ENCODE measurements at regions of chr6 and their contacts with region 1.

Region 1: GRCh38 chr6:37791156-37791919 is 28.2 kb upstream of the ZFAND3 start:
- DNase-seq: peak; percentile 96
- H3K4me3 ChIP-seq: no peak overlapping the region
- H3K27ac ChIP-seq: peak overlapping the region in 1 of 4 donors; percentile 25
- H3K4me1 ChIP-seq: peaks cover 0 to 12% (median 11%) of the 10 kb centered on the region in 4 donors
- H3K27me3 ChIP-seq: no peaks in the 10 kb centered on the region
- CTCF ChIP-seq: peak; percentile 73 to 93 (median 86)
- EP300 ChIP-seq: no peak
- POLR2A ChIP-seq: no peak

Region 2: DNA sequence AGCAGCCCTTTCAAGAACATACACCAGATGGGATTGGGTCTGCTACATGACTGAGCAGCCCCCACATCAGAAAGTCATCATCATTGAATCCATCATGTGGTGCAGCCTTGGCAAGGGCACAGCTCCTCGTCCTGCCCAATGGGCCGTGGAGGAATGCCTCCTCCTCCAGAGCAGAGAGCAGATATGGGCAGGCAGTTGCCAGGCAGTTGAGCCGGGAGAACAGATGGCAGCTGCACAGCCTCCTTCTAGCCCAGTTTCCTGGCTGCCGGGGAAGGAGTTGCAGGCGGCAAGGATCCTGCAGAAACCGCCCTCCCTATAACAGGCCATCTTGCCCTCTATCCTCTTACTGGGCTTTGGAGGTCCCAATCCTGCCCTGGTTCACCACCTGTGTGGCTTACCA is 16.3 kb after region 1 on chr6:
- intact Hi-C with region 1: no loop called
- DNase-seq: no peak
- H3K4me3 ChIP-seq: no peak overlapping the region
- H3K27ac ChIP-seq: no peak overlapping the region
- H3K4me1 ChIP-seq: no peaks in the 10 kb centered on the region
- H3K27me3 ChIP-seq: no peaks in the 10 kb centered on the region
- CTCF ChIP-seq: no peak
- EP300 ChIP-seq: no peak
- POLR2A ChIP-seq: no peak

Region 3: GRCh38 chr6:37858363-37858762 is 67.0 kb after region 1 on chr6:
- intact Hi-C with region 1: loop called (anchors 5 kb)
- DNase-seq: no peak
- H3K4me3 ChIP-seq: no peak overlapping the region
- H3K27ac ChIP-seq: no peak overlapping the region
- H3K4me1 ChIP-seq: peaks cover 0 to 44% (median 19%) of the 10 kb centered on the region in 4 donors
- H3K27me3 ChIP-seq: no peaks in the 10 kb centered on the region
- CTCF ChIP-seq: no peak
- EP300 ChIP-seq: no peak
- POLR2A ChIP-seq: no peak

Region 4: GRCh38 chr6:37897321-37897720 is 106.0 kb after region 1 on chr6:
- intact Hi-C with region 1: no loop called
- DNase-seq: no peak
- H3K4me3 ChIP-seq: no peak overlapping the region
- H3K27ac ChIP-seq: no peak overlapping the region
- H3K4me1 ChIP-seq: peaks cover 0 to 22% (median 15%) of the 10 kb centered on the region in 4 donors
- H3K27me3 ChIP-seq: no peaks in the 10 kb centered on the region
- CTCF ChIP-seq: no peak
- EP300 ChIP-seq: no peak
- POLR2A ChIP-seq: no peak

Region 5: GRCh38 chr6:38068854-38069590 is 277.7 kb after region 1 on chr6:
- intact Hi-C with region 1: no loop called
- DNase-seq: no peak
- H3K4me3 ChIP-seq: no peak overlapping the region
- H3K27ac ChIP-seq: no peak overlapping the region
- H3K4me1 ChIP-seq: peaks cover 0 to 63% (median 50%) of the 10 kb centered on the region in 4 donors
- H3K27me3 ChIP-seq: no peaks in the 10 kb centered on the region
- CTCF ChIP-seq: no peak
- EP300 ChIP-seq: no peak
- POLR2A ChIP-seq: no peak

Region 6: DNA sequence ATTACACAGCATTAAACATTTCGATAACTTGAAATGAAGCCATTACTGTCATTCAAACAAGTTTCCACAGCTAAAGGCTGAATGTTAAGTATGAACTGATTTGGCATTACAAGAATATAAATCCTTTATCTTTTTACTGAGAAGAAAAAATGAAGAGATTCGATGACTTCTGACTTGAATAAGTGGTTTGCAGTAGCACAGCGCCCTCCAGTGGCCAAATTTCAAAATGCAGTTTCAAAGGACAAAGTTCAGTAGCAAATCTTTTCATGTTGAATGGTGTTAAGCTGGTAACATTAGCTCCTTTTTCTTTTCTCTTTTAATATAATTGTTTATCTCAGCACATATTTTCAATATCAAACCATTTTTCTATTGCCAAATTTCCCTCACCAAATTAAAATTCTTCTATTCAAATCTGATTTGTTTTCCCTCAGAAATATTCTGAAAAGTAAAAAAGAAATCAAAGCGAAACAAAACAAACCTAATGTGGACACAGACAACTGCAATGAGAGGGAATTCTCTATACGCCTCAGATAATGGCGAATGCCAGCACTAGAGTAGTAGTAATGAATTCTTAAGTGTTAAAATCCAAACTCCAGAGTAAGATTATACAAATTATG is 702.7 kb after region 1 on chr6:
- intact Hi-C with region 1: loop called (anchors 2 kb)
- DNase-seq: peak; percentile 87
- H3K4me3 ChIP-seq: no peak overlapping the region
- H3K27ac ChIP-seq: no peak overlapping the region
- H3K4me1 ChIP-seq: peaks cover 0 to 7% (median 0%) of the 10 kb centered on the region in 4 donors
- H3K27me3 ChIP-seq: no peaks in the 10 kb centered on the region
- CTCF ChIP-seq: peak; percentile 66 to 88 (median 83)
- EP300 ChIP-seq: no peak
- POLR2A ChIP-seq: no peak